Activated CD4-positive, alpha-beta T cell treated with anti-CD3 and anti-CD28 coated beads for 36 hours (primary cell): ENCODE measurements at regions of chr11 and their contacts with region 1.

Region 1: GRCh38 chr11:36478700-36479329 is 31.3 kb downstream of the TRAF6 start:
- DNase-seq: peak; percentile 54
- ATAC-seq: peak; percentile 44
- H3K4me3 Mint-ChIP-seq: no peak overlapping the region
- H3K27ac Mint-ChIP-seq: no peak overlapping the region
- H3K4me1 Mint-ChIP-seq: peaks cover 6% of the 10 kb centered on the region
- H3K27me3 Mint-ChIP-seq: no peaks in the 10 kb centered on the region

Region 2: GRCh38 chr11:36212564-36213392 is 266.0 kb before region 1 on chr11:
- CTCF ChIA-PET with region 1: no interaction called
- POLR2A ChIA-PET with region 1: no interaction called
- intact Hi-C with region 1: no loop called
- DNase-seq: no peak
- ATAC-seq: no peak
- H3K4me3 Mint-ChIP-seq: no peak overlapping the region
- H3K27ac Mint-ChIP-seq: no peak overlapping the region
- H3K4me1 Mint-ChIP-seq: no peaks in the 10 kb centered on the region
- H3K27me3 Mint-ChIP-seq: peaks cover 10% of the 10 kb centered on the region

Region 3: DNA sequence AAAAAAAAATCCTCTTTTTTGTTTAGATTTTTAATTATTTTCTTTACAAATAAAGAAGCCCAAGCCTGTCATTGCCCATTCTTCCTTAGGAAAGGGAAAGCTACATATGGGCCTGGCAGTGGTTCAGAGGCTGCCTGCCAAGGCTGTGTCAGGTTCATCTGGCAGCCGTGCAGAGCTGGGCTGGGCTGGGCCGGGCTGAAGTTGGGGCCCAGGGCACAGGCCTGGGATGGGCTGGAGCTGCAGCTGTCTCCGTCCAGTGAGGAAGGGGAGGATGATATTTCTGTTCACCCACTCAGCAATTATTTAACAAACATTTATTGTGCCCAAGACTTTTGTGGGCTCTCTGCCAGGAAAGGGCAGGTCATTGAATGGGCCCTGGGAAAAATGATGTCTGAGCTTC is 178.2 kb before region 1 on chr11:
- CTCF ChIA-PET with region 1: interaction called, 11 read pairs
- POLR2A ChIA-PET with region 1: no interaction called
- intact Hi-C with region 1: no loop called
- DNase-seq: no peak
- ATAC-seq: no peak
- H3K4me3 Mint-ChIP-seq: no peak overlapping the region
- H3K27ac Mint-ChIP-seq: no peak overlapping the region
- H3K4me1 Mint-ChIP-seq: no peaks in the 10 kb centered on the region
- H3K27me3 Mint-ChIP-seq: peaks cover 6% of the 10 kb centered on the region

Region 4: DNA sequence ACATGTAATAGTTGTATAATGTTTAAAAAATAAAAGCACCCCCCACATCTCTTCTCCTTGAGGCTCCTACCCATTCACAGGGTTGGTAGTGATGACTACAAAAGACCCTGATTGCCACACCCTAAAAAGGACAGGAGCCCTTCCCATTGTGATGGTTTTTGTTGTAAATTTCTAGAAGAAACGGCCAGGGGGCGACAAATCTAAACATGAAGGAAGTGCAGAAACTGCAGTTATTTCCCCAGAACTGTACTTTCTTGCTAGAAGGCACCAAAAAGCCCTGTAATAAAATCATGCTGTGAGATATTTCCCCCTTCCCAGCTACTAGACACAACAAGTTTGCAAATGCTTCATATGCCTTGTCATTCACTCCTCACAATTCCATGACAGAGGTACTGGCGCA is 171.9 kb before region 1 on chr11:
- CTCF ChIA-PET with region 1: interaction called, 6 read pairs
- POLR2A ChIA-PET with region 1: no interaction called
- intact Hi-C with region 1: loop called (anchors 1 to 2 kb)
- DNase-seq: peak; percentile 64
- ATAC-seq: peak; percentile 53
- H3K4me3 Mint-ChIP-seq: no peak overlapping the region
- H3K27ac Mint-ChIP-seq: no peak overlapping the region
- H3K4me1 Mint-ChIP-seq: peaks cover 12% of the 10 kb centered on the region
- H3K27me3 Mint-ChIP-seq: peaks cover 13% of the 10 kb centered on the region

Region 5: DNA sequence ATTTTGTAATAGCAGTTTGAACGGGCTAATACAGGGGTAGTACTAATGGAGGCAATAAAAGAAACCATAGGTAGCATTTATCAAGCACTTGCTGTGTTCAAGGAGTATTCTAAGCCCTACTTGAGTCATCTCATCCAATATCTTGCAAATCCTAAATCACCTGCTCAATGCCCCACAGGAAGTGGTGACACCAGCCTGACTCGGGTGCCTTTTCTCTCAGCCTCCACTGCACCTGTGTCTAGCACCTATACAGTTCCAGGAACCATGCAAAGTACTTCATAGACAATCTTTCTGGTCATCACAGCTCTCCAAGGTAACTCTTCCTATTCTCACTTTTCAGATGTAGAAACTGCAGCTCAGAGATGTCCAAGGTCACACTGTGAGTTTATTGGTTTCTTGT is 84.8 kb before region 1 on chr11:
- CTCF ChIA-PET with region 1: no interaction called
- POLR2A ChIA-PET with region 1: no interaction called
- intact Hi-C with region 1: no loop called
- DNase-seq: peak; percentile 53
- ATAC-seq: peak; percentile 45
- H3K4me3 Mint-ChIP-seq: no peak overlapping the region
- H3K27ac Mint-ChIP-seq: peak overlapping the region; percentile 80
- H3K4me1 Mint-ChIP-seq: peaks cover 57% of the 10 kb centered on the region
- H3K27me3 Mint-ChIP-seq: no peaks in the 10 kb centered on the region

Region 6: GRCh38 chr11:36452236-36452940 is 26.4 kb before region 1 on chr11:
- CTCF ChIA-PET with region 1: interaction called, 10 read pairs
- POLR2A ChIA-PET with region 1: no interaction called
- intact Hi-C with region 1: no loop called
- DNase-seq: peak; percentile 47
- ATAC-seq: peak; percentile 40
- H3K4me3 Mint-ChIP-seq: no peak overlapping the region
- H3K27ac Mint-ChIP-seq: peak overlapping the region; percentile 4
- H3K4me1 Mint-ChIP-seq: peaks cover 47% of the 10 kb centered on the region
- H3K27me3 Mint-ChIP-seq: no peaks in the 10 kb centered on the region